Activated CD4-positive, alpha-beta memory T cell treated with anti-CD3 and anti-CD28 coated beads, Interleukin-2, amount 10 ng/mL, durations not matched to agents 7 days and 5 days (primary cell): ENCODE measurements at regions of chr13 and their contacts with region 1.

Region 1: DNA sequence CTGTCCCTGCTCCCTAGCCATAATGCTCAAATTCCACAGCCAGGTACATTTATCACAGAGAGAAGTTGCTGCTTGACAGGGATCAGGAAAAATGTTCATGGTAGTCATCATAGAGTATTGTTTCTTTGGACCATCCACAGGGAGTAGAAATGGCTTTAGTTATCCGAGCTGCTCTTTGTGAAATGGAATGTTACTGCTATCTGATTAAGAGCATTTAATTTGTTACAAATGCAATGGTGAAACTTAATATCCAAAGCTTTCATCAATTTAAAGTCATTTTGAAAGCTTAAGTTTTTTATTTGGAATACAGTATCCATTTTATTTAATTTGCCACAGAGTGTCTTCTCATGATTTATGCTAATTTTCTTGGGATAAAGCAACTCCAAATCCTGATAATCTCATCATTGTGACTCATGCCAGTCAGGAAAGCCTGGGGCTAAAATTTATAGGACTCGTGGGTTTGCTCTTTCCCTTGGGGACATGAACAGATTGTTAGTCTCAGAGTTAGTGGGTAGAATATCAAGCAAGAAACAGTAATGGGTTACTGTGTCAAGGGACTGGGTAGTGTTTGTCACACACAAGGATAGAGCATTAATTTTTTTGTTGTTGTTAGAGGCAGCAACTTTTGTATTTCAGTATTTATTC is 59.8 kb downstream of the SCEL start:
- DNase-seq: no peak
- H3K4me3 Mint-ChIP-seq: no peak overlapping the region
- H3K27ac Mint-ChIP-seq: no peak overlapping the region
- H3K4me1 Mint-ChIP-seq: no peaks in the 10 kb centered on the region
- H3K27me3 Mint-ChIP-seq: peaks cover 20% of the 10 kb centered on the region

Region 2: DNA sequence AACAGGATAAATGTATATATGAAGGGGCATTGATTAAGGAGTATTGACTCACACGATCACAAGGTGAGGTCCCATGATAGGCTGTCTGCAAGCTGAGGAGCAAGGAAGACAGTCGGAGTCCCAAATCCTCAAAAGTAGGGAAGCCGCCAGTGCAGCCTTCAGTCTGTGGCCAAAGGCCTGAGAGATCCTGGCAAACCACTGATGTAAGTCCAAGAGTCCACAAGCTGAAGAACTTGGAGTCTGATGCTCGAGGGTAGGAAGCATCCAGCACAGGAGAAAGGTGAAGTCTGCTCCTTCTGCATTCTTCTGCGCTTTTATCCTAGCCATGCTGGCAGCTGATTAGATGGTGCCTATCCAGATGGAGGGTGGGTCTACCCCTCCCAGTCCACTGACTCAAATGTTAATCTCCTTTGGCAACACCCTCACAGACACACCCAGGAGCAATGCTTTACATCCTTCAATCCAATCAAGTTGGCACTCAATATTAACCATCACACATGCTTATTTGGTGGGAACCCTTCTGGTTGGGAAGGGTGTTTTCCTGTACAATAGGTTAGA is 157.3 kb after region 1 on chr13:
- CTCF ChIA-PET with region 1: interaction called, 25 read pairs
- POLR2A ChIA-PET with region 1: no interaction called
- DNase-seq: no peak
- H3K4me3 Mint-ChIP-seq: no peak overlapping the region
- H3K27ac Mint-ChIP-seq: no peak overlapping the region
- H3K4me1 Mint-ChIP-seq: peaks cover 10% of the 10 kb centered on the region
- H3K27me3 Mint-ChIP-seq: no peaks in the 10 kb centered on the region